WTC11 (cell line): ENCODE measurements at regions of chr16 and their contacts with region 1.

Region 1: GRCh38 chr16:19991614-19992013 is 82.1 kb downstream of the GPR139 start:
- DNase-seq: peak; percentile 17
- ATAC-seq: peak; percentile 74
- H3K4me3 Mint-ChIP-seq: peak overlapping the region; percentile 4; the same call in 1 of the 2 replicates
- H3K27ac Mint-ChIP-seq: no peak overlapping the region
- H3K4me1 Mint-ChIP-seq: peaks cover 13% of the 10 kb centered on the region
- H3K27me3 Mint-ChIP-seq: no peaks in the 10 kb centered on the region; the same call in 1 of the 2 replicates
- CTCF ChIP-seq: no peak

Region 2: GRCh38 chr16:19980632-19981265 is 10.9 kb before region 1 on chr16:
- CTCF ChIA-PET with region 1: interaction called, 32 read pairs
- POLR2A ChIA-PET with region 1: no interaction called
- DNase-seq: peak; percentile 41
- ATAC-seq: peak; percentile 92
- H3K4me3 Mint-ChIP-seq: no peak overlapping the region
- H3K27ac Mint-ChIP-seq: 0 out of 2 replicates have a peak overlapping the region, but pooled peaks have one; percentile 34
- H3K4me1 Mint-ChIP-seq: peaks cover 30% of the 10 kb centered on the region
- H3K27me3 Mint-ChIP-seq: no peaks in the 10 kb centered on the region
- CTCF ChIP-seq: peak; percentile 46

Region 3: DNA sequence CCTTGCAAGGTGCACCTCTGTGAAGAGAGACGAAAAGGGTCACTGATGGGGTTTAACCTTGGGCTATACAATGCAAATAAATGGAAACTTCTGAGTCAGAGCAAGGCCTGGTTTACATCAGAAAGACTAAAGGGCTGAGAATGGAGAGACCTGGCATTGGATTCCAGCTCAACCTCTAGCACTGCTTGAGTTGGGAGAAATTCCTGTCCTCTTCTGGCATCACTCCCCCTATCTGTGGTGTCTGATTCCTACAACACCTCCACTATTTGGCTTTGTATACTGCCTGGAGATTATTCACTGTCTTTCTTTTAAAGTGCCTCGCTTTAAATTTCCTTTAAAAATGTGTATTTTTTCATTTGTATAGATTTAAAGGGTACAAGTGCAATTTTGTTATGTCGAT is 13.3 kb after region 1 on chr16:
- CTCF ChIA-PET with region 1: interaction called, 12 read pairs
- POLR2A ChIA-PET with region 1: no interaction called
- DNase-seq: peak; percentile 23
- ATAC-seq: peak; percentile 96
- H3K4me3 Mint-ChIP-seq: no peak overlapping the region
- H3K27ac Mint-ChIP-seq: no peak overlapping the region
- H3K4me1 Mint-ChIP-seq: peaks cover 4% of the 10 kb centered on the region; the same call in 1 of the 2 replicates
- H3K27me3 Mint-ChIP-seq: no peaks in the 10 kb centered on the region
- CTCF ChIP-seq: peak; percentile 28; the same call in 1 of the 2 replicates

Region 4: GRCh38 chr16:20020087-20020486 is 28.5 kb after region 1 on chr16:
- CTCF ChIA-PET with region 1: no interaction called
- POLR2A ChIA-PET with region 1: no interaction called
- DNase-seq: no peak
- ATAC-seq: no peak
- H3K4me3 Mint-ChIP-seq: no peak overlapping the region
- H3K27ac Mint-ChIP-seq: no peak overlapping the region
- H3K4me1 Mint-ChIP-seq: peaks cover 10% of the 10 kb centered on the region
- H3K27me3 Mint-ChIP-seq: peaks cover 13% of the 10 kb centered on the region
- CTCF ChIP-seq: no peak

Region 5: GRCh38 chr16:20107095-20107494 is 115.5 kb after region 1 on chr16:
- CTCF ChIA-PET with region 1: no interaction called
- POLR2A ChIA-PET with region 1: no interaction called
- DNase-seq: no peak
- ATAC-seq: 0 out of 2 replicates have a peak, but pooled peaks have one; percentile 50
- H3K4me3 Mint-ChIP-seq: no peak overlapping the region
- H3K27ac Mint-ChIP-seq: no peak overlapping the region
- H3K4me1 Mint-ChIP-seq: no peaks in the 10 kb centered on the region
- H3K27me3 Mint-ChIP-seq: no peaks in the 10 kb centered on the region; the same call in 1 of the 2 replicates
- CTCF ChIP-seq: no peak